PC-3 (cell line): ENCODE measurements at regions of chr17 and their contacts with region 1.

Region 1: DNA sequence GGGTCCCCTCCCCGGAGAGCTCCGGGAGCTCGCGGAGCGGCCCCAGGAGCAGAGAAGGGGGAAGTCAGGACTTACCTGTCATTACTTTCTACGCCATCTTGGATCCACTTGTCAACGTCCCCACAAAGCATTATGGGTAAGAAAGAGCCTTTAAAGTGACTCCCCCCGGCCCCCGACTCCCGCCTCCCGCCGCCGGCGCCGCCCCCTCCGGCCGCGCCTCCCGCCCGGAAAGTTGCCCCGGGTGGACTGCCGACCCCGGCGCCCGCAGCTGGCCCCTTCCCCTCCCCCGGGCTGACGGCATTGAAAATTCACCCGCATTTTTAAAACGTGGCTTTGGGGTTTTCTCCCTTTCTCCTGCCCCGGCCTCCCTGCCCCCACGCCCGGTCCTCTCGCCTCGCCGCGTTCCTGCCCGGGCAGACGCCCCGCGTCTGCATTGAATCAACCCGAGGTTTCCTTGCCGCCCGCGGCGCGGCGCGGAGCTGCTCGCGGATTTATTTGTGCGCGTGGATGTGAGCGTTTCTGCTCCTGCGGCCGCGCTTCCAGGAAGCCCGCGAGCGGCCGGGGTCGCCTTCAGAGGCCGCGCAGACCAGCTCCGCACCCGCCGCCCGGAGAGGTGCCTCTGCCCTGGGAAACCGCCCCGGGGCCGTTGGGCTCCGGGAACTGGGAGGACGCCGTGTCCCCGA is at the start of gene HELZ:
- DNase-seq: peak; percentile 87
- ATAC-seq: peak; percentile 28
- H3K4me3 ChIP-seq: peak within 1 kb of the TSS; percentile 93
- H3K27ac ChIP-seq: peak within 1 kb of the TSS; percentile 9; the same call in 1 of the 2 replicates
- H3K4me1 ChIP-seq: peaks cover 20% of the 10 kb centered on the region
- H3K27me3 ChIP-seq: no peaks in the 10 kb centered on the region
- CTCF ChIP-seq: no peak
- total RNA-seq, gene HELZ: 22.6 and 31.3 TPM in 2 replicates

Region 2: GRCh38 chr17:67221062-67221998 is 23.9 kb before region 1 on chr17:
- CTCF ChIA-PET with region 1: no interaction called
- POLR2A ChIA-PET with region 1: no interaction called
- intact Hi-C with region 1: loop called (anchors 1 kb)
- DNase-seq: peak; percentile 54
- ATAC-seq: peak; percentile 66
- H3K4me3 ChIP-seq: no peak overlapping the region
- H3K27ac ChIP-seq: no peak overlapping the region
- H3K4me1 ChIP-seq: peaks cover 9% of the 10 kb centered on the region
- H3K27me3 ChIP-seq: no peaks in the 10 kb centered on the region
- CTCF ChIP-seq: peak; percentile 69

Region 3: DNA sequence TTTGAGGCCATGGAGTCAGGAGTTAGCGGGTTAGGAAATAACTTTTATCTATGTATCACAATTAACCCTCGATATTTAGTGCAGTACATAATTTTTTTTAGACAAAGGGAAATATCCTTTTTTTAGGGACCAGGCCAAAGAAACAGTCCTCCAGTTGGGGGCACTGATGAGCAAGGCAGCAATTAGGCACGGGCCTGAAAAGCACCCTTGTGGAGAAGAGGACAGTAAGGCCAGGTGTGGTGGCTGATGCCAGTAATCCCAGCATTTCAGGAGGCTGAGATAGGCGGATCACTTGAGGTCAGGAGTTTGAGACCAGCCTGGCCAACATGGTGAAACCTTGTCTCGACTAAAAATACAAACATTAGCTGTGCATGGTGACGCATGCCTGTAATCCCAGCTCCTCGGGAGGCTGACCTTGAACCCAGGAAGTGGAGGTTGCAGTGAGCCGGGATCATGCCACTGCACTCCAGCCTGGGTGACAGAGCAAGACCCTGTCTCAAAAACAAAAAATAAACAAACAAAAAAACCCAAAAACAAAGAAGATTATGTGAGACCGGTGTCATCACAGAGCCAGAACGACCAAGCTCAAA is 314.3 kb after region 1 on chr17:
- CTCF ChIA-PET with region 1: no interaction called
- POLR2A ChIA-PET with region 1: no interaction called
- intact Hi-C with region 1: no loop called
- DNase-seq: peak; percentile 50
- ATAC-seq: no peak
- H3K4me3 ChIP-seq: no peak overlapping the region
- H3K27ac ChIP-seq: no peak overlapping the region
- H3K4me1 ChIP-seq: no peaks in the 10 kb centered on the region
- H3K27me3 ChIP-seq: no peaks in the 10 kb centered on the region
- CTCF ChIP-seq: peak; percentile 68